GM12878 (cell line): ENCODE measurements at regions of chr10 and their contacts with region 1.

Region 1: GRCh38 chr10:58299580-58299979 is 30.6 kb downstream of the CISD1 start:
- DNase-seq: no peak
- ATAC-seq: peak; percentile 95
- H3K4me3 ChIP-seq: no peak overlapping the region
- H3K27ac ChIP-seq: no peak overlapping the region
- H3K4me1 ChIP-seq: no peaks in the 10 kb centered on the region
- H3K27me3 ChIP-seq: no peaks in the 10 kb centered on the region
- CTCF ChIP-seq: peak; percentile 83 to 87 (median 85)
- EP300 ChIP-seq: no peak
- POLR2A ChIP-seq: no peak
- RAD21 ChIP-seq: peak; percentile 95

Region 2: GRCh38 chr10:58177362-58177947 is 122.1 kb before region 1 on chr10:
- CTCF ChIA-PET with region 1: interaction called, 385 read pairs
- POLR2A ChIA-PET with region 1: no interaction called
- RAD21 ChIA-PET with region 1: interaction called, 9 read pairs
- SMC1A ChIA-PET with region 1: interaction called, 203 read pairs
- in situ Hi-C with region 1: no loop called
- intact Hi-C with region 1: no loop called
- DNase-seq: no peak
- ATAC-seq: peak; percentile 46; the same call in 2 of the 3 replicates
- H3K4me3 ChIP-seq: no peak overlapping the region
- H3K27ac ChIP-seq: no peak overlapping the region
- H3K4me1 ChIP-seq: no peaks in the 10 kb centered on the region
- H3K27me3 ChIP-seq: no peaks in the 10 kb centered on the region
- CTCF ChIP-seq: peak; percentile 37 to 65 (median 48); a peak in 5 of 6 replicates
- EP300 ChIP-seq: no peak
- POLR2A ChIP-seq: no peak
- RAD21 ChIP-seq: peak; percentile 79

Region 3: GRCh38 chr10:58319599-58319998 is 20.0 kb after region 1 on chr10:
- CTCF ChIA-PET with region 1: interaction called, 10 read pairs
- POLR2A ChIA-PET with region 1: no interaction called
- RAD21 ChIA-PET with region 1: interaction called, 4 read pairs
- SMC1A ChIA-PET with region 1: interaction called, 5 read pairs
- in situ Hi-C with region 1: no loop called
- intact Hi-C with region 1: no loop called
- DNase-seq: no peak
- ATAC-seq: no peak
- H3K4me3 ChIP-seq: no peak overlapping the region
- H3K27ac ChIP-seq: no peak overlapping the region
- H3K4me1 ChIP-seq: peaks cover 4% of the 10 kb centered on the region; the same call in 1 of the 2 replicates
- H3K27me3 ChIP-seq: no peaks in the 10 kb centered on the region; a peak in 1 of 4 replicates
- CTCF ChIP-seq: no peak; a peak in 1 of 6 replicates
- EP300 ChIP-seq: no peak
- POLR2A ChIP-seq: no peak
- RAD21 ChIP-seq: 0 out of 2 replicates have a peak, but pooled peaks have one; percentile 4

Region 4: DNA sequence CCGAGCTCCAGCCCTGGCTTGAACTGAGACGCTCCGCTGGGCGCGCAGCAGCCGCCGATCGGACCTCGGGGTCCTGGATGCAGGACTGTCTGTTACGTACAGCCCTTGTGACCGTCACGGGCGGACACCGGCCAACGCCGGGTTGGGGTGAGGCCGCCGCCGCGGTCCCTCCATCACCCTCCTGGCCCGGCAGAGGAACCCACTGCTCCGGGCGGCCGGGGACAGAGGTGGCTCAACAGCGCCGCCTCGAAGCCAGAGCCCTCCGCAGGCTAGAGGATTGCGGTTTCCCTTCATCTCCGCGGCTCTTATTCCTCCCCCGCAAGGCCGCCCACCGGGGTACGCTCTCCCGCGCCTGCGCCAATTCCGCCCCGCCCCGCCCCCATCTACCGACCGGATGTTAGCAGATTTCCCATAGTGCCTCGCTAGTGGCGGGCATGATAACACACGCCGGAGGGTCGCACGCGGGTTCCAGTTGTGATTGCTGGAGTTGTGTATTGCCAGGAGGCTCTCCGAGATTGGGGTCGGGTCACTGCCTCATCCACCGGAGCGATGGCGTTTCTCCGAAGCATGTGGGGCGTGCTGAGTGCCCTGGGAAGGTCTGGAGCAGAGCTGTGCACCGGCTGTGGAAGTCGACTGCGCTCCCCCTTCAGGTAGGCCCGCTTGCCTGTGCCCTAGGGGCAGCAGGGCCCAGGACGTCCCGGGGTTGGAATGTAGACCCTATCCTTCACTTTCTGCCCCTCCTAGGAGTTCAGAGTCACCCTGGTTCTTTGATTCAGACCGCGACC is 85.6 kb after region 1 on chr10 and contains the start of gene TFAM:
- CTCF ChIA-PET with region 1: interaction called, 67 read pairs
- POLR2A ChIA-PET with region 1: interaction called, 6 read pairs
- RAD21 ChIA-PET with region 1: interaction called, 41 read pairs
- SMC1A ChIA-PET with region 1: interaction called, 58 read pairs
- in situ Hi-C with region 1: no loop called
- intact Hi-C with region 1: loop called (anchors 2 kb)
- DNase-seq: peak; percentile 66
- ATAC-seq: peak; percentile 90
- H3K4me3 ChIP-seq: peak within 1 kb of the TSS; percentile 85
- H3K27ac ChIP-seq: peak within 1 kb of the TSS; percentile 88
- H3K4me1 ChIP-seq: peaks cover 5% of the 10 kb centered on the region
- H3K27me3 ChIP-seq: no peaks in the 10 kb centered on the region
- CTCF ChIP-seq: peak; percentile 49 to 67 (median 61)
- EP300 ChIP-seq: peak in 1 of 2 experiments; percentile 30; a peak in 1 of 4 replicates
- POLR2A ChIP-seq: peak; percentile 99
- RAD21 ChIP-seq: peak; percentile 70
- polyA plus RNA-seq, gene TFAM: 96.1 to 114 TPM

Region 5: DNA sequence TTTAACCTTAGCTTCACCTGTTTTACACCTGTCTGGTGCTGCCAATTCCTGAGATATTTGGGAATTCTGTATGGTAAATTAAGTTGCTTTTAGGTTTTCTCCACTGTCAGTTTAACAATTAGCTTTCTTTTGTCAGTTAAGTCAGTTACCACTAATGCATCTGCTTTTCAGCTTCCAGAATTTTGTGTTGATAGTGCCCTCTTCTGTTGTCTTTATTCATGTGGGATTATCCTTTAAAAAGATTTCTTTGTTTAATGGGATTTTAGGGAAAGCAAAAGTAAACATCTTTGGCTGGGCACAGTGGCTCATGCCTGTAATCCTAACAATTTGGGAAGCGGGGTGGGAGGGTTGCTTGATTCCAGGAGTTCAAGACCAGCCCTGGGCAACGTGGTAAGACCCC is 93.7 kb after region 1 on chr10:
- CTCF ChIA-PET with region 1: interaction called, 67 read pairs
- POLR2A ChIA-PET with region 1: interaction called, 3 read pairs
- RAD21 ChIA-PET with region 1: interaction called, 4 read pairs
- SMC1A ChIA-PET with region 1: interaction called, 26 read pairs
- in situ Hi-C with region 1: no loop called
- intact Hi-C with region 1: no loop called
- DNase-seq: no peak
- ATAC-seq: no peak
- H3K4me3 ChIP-seq: no peak overlapping the region
- H3K27ac ChIP-seq: no peak overlapping the region
- H3K4me1 ChIP-seq: no peaks in the 10 kb centered on the region
- H3K27me3 ChIP-seq: no peaks in the 10 kb centered on the region
- CTCF ChIP-seq: no peak
- EP300 ChIP-seq: no peak
- POLR2A ChIP-seq: no peak
- RAD21 ChIP-seq: no peak

Region 6: GRCh38 chr10:58531084-58531695 is 231.6 kb after region 1 on chr10:
- CTCF ChIA-PET with region 1: interaction called, 31 read pairs
- POLR2A ChIA-PET with region 1: no interaction called
- RAD21 ChIA-PET with region 1: interaction called, 12 read pairs
- SMC1A ChIA-PET with region 1: interaction called, 24 read pairs
- in situ Hi-C with region 1: no loop called
- intact Hi-C with region 1: no loop called
- DNase-seq: peak; percentile 16
- ATAC-seq: peak; percentile 93
- H3K4me3 ChIP-seq: no peak overlapping the region
- H3K27ac ChIP-seq: no peak overlapping the region
- H3K4me1 ChIP-seq: no peaks in the 10 kb centered on the region
- H3K27me3 ChIP-seq: no peaks in the 10 kb centered on the region
- CTCF ChIP-seq: peak; percentile 68 to 79 (median 75)
- EP300 ChIP-seq: no peak
- POLR2A ChIP-seq: no peak
- RAD21 ChIP-seq: peak; percentile 73

Region 7: DNA sequence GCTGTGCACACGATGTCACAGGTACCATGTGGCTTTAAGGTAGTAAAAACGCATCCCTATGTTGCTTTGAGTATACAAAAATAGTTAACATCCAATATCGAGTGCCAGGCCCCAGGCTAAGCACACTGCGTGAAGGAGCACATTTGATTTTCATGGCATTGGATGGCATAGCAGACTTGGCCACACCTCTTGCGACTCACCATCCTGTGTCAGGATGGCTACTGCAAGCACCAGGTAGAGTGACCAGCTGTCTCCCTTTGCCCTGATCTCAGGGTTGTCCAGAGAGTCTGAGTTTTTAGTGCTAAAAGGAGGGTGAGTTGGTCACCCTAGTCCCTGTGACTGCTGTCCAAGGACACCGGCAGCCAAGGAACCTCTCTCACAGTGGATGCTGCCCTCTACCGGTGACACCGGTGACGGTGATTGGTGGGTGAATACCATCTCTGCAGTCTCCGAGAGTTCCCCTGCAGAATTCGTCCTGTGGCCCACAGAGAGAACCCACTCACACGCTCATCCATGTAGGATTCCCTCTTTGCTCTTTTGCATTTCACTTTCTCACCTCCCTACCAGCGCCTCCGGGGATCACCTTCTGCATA is 289.2 kb after region 1 on chr10:
- CTCF ChIA-PET with region 1: interaction called, 4 read pairs
- POLR2A ChIA-PET with region 1: no interaction called
- RAD21 ChIA-PET with region 1: interaction called, 3 read pairs
- SMC1A ChIA-PET with region 1: no interaction called
- in situ Hi-C with region 1: no loop called
- intact Hi-C with region 1: loop called (anchors 10 kb)
- DNase-seq: no peak
- ATAC-seq: peak; percentile 44; the same call in 2 of the 3 replicates
- H3K4me3 ChIP-seq: no peak overlapping the region
- H3K27ac ChIP-seq: no peak overlapping the region
- H3K4me1 ChIP-seq: no peaks in the 10 kb centered on the region
- H3K27me3 ChIP-seq: no peaks in the 10 kb centered on the region; a peak in 1 of 4 replicates
- CTCF ChIP-seq: no peak
- EP300 ChIP-seq: no peak
- POLR2A ChIP-seq: no peak
- RAD21 ChIP-seq: no peak